ENCODE measurements at regions of chr19 and their contacts with region 1.

Region 1: DNA sequence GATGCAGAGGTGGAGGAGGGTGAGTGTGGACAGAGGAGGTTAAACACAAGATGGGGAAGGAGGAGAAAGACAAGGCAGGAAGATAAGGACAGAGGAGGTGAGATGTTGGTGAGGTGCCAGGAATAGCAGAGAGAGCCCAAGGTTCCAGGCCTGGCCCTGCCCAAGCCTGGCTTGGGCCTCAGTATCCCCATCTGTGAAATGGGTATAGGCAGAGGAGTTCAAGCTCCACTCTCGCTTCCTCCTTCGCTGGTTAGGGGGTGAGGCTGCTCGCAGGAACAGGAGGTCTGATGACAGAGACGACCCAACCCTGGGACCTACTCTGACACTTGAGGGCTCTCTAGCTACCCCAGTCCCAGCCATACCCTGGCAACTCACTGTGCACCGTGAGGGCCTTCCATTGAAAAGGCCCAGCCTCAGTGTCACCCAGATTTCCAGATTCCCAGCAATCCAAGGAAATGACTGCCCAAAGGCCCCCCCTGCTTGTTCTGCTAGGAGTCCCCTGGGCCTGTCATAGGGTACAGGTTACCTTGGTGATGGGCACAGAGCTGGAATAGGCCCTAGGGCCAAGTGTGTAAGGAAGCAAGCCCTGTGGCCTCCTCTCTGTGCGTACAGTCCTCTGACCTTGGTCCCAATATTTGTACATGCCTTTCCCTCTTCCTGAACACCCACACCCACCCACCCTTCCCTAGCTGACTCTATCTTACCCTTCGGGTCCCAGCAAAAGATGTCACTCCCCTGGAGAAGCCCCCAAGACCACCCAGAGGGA is 8.6 kb upstream of the ANGPTL8 start:
- DNase-seq: no peak
- ATAC-seq: no peak
- H3K4me3 ChIP-seq: no peak overlapping the region
- H3K27ac ChIP-seq: no peak overlapping the region
- H3K4me1 ChIP-seq: no peaks in the 10 kb centered on the region
- CTCF ChIP-seq: no peak
- EP300 ChIP-seq: no peak
- POLR2A ChIP-seq: no peak
- RAD21 ChIP-seq: no peak

Region 2: GRCh38 chr19:11242864-11243797 is 12.3 kb after region 1 on chr19:
- CTCF ChIA-PET with region 1: interaction called, 12 read pairs
- POLR2A ChIA-PET with region 1: no interaction called
- DNase-seq: peak; percentile 80 to 87
- ATAC-seq: peak; percentile 89 to 94
- H3K4me3 ChIP-seq: no peak overlapping the region
- H3K27ac ChIP-seq: peak overlapping the region in 1 of 2 experiments; percentile 60; a peak in 2 of 6 replicates
- H3K4me1 ChIP-seq: 0 out of 3 replicates have a peak, but pooled peaks cover 4% of the 10 kb centered on the region
- CTCF ChIP-seq: peak; percentile 62
- EP300 ChIP-seq: no peak
- POLR2A ChIP-seq: no peak
- RAD21 ChIP-seq: peak; percentile 15 to 51; a peak in 3 of 5 replicates

Region 3: GRCh38 chr19:11293433-11294389 is 62.9 kb after region 1 on chr19:
- CTCF ChIA-PET with region 1: no interaction called
- POLR2A ChIA-PET with region 1: no interaction called
- DNase-seq: peak; percentile 79 to 93
- ATAC-seq: peak; percentile 99
- H3K4me3 ChIP-seq: peak overlapping the region; percentile 39
- H3K27ac ChIP-seq: peak overlapping the region; percentile 78 to 79
- H3K4me1 ChIP-seq: peaks cover 10% of the 10 kb centered on the region; the same call in 1 of the 3 replicates
- CTCF ChIP-seq: peak; percentile 84
- EP300 ChIP-seq: no peak
- POLR2A ChIP-seq: peak; percentile 55
- RAD21 ChIP-seq: peak; percentile 90 to 96

Region 4: DNA sequence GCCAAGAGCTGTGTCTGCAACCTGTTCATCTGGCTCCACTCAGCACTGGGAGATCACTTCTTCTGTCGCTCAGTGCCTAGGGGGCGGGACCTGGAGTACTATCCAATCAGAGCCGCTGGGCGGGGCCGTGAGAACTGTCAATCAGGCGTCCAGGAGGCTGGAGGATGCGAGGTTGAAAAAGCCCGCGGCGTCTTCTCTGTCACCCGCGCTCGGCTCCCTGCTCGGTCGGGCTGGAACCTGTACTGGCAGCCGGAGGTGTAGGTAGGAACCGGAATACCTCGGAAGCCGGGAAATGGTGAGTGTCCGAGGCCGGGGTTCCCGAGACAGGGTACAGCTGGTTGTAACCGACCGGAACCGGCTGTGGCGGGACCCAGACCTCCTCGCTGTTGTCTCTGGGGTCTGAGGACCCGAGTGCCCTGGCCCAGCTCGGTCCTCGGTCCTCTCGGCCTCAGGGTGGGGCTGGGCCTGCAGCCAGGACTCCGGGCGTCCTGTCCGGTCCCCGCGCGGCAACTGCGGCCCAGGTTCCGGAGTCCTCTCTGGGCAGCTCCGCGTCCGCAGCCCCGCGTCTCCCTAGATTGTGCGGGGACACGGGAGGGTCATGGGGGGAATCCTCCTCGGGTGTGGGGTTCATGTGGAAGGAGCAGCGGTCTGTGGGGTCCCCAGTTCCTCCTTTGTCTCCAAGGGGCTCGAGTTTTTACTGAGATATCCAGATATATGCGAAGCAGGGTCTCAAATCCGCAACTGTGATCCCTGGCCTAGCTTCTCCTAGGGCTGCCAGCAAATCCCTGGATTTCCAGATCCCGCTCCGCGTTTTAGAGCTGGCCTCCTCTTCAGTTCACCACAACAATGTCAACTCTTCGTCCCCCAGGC is 409.0 kb after region 1 on chr19:
- CTCF ChIA-PET with region 1: no interaction called
- POLR2A ChIA-PET with region 1: no interaction called
- DNase-seq: peak; percentile 84 to 87
- ATAC-seq: peak; percentile 99
- H3K4me3 ChIP-seq: peak overlapping the region; percentile 64
- H3K27ac ChIP-seq: peak overlapping the region; percentile 53 to 82
- H3K4me1 ChIP-seq: no peaks in the 10 kb centered on the region
- CTCF ChIP-seq: no peak
- EP300 ChIP-seq: no peak
- POLR2A ChIP-seq: no peak
- RAD21 ChIP-seq: no peak

Measured in A549 (cell line).